Calu3 (cell line): ENCODE measurements at regions of chr11 and their contacts with region 1.

Region 1: GRCh38 chr11:27456140-27456794 is 16.3 kb downstream of the LGR4 start:
- DNase-seq: no peak
- H3K4me3 Mint-ChIP-seq: peak overlapping the region; percentile 36
- H3K27ac Mint-ChIP-seq: peak overlapping the region; percentile 84
- H3K4me1 Mint-ChIP-seq: peaks cover 67% of the 10 kb centered on the region
- H3K27me3 Mint-ChIP-seq: no peaks in the 10 kb centered on the region
- CTCF ChIP-seq: no peak

Region 2: DNA sequence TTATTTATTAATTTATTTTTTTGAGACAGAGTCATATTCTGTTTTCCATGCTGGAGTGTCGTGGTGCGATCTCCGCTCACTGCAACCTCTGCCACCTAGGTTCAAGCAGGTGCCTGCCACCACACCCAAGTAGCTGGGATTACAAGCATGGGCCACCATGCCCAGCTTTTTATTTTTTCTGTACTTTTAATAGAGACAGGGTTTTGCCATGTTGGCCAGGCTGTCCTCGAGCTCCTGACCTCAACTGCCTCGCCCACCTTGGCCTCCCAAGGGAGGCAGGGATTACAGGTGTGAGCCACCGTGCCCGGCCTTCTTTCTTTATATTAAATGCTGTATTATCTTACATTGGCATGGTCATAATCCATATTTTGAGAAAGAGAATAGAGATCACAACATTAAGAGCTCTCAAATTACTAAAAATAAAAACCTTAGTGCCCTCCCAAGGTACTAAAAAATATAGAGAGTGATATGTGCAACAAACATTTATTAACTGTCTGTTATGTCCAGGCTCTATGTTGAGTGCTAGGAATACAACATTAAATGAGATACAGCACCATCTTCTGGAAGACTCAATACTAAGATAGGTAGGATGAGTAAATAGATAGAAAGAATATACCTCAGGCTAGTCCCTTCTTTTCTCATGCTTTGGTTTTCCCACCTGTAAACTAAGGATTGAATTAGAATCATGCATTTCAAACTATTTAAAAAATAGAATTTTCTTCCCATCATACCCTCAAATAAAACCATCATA is 331.6 kb before region 1 on chr11:
- CTCF ChIA-PET with region 1: no interaction called
- intact Hi-C with region 1: no loop called
- DNase-seq: no peak
- H3K4me3 Mint-ChIP-seq: no peak overlapping the region
- H3K27ac Mint-ChIP-seq: no peak overlapping the region
- H3K4me1 Mint-ChIP-seq: no peaks in the 10 kb centered on the region
- H3K27me3 Mint-ChIP-seq: peaks cover 16% of the 10 kb centered on the region
- CTCF ChIP-seq: no peak

Region 3: DNA sequence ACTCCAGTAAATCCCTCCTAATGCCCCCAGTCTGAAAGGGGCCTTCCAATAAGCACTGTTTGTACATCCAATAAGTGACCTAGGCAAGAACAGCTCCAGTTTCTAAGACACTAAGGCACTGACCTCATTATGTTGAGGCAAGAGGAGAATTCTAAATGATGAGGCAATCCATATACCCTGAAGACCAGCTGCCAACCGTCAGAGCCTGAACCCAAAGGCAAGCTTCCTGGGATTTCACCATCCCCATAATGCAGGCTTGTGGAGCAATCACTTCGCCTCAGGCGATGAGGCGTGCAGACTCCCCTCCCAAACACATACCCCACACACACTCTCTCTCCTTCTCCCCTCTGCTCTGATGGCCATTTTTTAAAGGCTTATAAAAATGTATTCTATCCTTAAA is 33.1 kb before region 1 on chr11:
- CTCF ChIA-PET with region 1: no interaction called
- intact Hi-C with region 1: loop called (anchors 5 kb)
- DNase-seq: no peak
- H3K4me3 Mint-ChIP-seq: no peak overlapping the region
- H3K27ac Mint-ChIP-seq: no peak overlapping the region
- H3K4me1 Mint-ChIP-seq: peaks cover 30% of the 10 kb centered on the region
- H3K27me3 Mint-ChIP-seq: no peaks in the 10 kb centered on the region
- CTCF ChIP-seq: no peak